A673 (cell line): ENCODE measurements at regions of chr14 and their contacts with region 1.

Region 1: DNA sequence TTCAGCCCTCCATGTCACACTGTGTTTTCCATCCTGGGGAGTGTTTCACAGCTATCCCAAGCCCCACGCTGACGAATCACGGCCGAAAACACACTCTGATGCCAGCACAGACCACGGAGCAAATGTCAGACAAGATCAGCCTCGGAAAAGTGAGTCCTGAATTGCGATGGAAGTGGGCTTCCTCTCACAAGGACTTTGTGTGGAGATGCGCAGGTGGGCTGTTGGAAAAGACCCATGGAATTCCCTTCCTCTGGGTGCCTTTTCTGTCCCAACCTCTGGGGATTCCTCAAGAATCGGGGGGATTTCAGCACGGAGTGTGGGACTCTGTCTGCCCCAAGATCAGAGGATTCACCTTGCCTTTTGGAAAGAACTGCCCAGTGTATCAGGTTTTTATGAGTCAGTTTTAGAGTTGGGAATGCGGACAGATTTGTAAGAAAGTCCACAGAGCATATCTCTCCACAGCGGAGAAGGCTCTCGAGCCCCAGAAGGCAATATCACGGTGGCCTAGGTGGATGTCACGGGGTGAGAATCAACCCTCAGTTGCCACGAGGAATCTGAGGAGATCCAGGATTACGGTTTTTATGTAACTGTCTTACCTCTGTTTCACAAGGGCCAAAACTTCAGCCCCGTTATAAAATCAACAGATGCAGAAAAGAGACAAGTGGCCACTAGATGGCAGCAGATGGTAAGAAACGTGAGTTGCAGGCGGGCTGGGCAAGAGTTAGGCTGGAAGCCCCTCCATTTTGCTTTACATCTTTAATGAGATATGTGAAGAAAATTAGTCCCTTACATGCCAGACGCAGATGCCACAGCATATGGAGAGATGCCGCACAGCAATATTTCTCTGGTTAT is 201.9 kb downstream of the DAD1 start:
- DNase-seq: peak; percentile 94
- H3K4me3 ChIP-seq: no peak overlapping the region
- H3K27ac ChIP-seq: no peak overlapping the region
- H3K4me1 ChIP-seq: peaks cover 31% of the 10 kb centered on the region
- H3K27me3 ChIP-seq: no peaks in the 10 kb centered on the region
- CTCF ChIP-seq: peak; percentile 87

Region 2: DNA sequence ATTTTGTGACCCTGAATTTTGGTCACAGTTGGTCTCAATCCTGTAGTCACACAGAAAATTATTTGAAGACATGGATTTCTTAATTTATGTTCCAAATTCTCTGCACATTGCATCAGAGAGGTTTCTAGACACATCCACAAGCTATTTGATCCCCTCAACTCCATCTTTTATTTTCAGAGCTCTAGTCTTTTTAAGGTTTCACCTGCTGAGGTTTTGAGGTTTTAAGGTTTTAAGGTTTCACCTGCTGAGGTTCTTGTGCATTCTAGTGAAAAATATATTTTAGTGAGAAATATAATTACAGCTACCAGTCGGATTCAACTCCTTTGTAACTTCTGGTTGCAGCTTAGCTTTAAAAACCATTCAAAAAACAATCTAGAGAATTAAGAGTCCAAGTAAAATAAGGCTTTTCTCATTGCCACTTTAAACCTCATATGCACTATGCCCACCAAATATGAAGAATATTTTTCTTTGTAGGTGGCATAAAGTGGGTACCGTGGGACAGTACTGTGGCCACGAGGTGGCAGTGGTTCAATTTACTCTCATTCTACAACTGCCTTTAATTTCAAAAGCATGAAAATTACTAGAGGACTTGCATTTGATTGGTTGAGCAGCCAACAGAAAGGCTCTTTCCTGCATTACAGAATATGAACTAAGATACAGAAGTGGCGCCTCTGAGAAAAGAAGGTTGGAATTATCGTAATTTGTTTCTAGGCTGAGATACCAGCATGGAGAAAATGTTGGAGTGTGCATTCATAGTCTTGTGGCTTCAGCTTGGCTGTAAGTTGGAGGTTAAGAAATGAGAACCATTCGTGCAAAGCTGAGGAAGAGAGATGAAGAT is 347.0 kb before region 1 on chr14:
- CTCF ChIA-PET with region 1: no interaction called
- POLR2A ChIA-PET with region 1: no interaction called
- intact Hi-C with region 1: no loop called
- DNase-seq: peak; percentile 49
- H3K4me3 ChIP-seq: no peak overlapping the region
- H3K27ac ChIP-seq: no peak overlapping the region
- H3K4me1 ChIP-seq: no peaks in the 10 kb centered on the region
- H3K27me3 ChIP-seq: no peaks in the 10 kb centered on the region
- CTCF ChIP-seq: peak; percentile 77

Region 3: DNA sequence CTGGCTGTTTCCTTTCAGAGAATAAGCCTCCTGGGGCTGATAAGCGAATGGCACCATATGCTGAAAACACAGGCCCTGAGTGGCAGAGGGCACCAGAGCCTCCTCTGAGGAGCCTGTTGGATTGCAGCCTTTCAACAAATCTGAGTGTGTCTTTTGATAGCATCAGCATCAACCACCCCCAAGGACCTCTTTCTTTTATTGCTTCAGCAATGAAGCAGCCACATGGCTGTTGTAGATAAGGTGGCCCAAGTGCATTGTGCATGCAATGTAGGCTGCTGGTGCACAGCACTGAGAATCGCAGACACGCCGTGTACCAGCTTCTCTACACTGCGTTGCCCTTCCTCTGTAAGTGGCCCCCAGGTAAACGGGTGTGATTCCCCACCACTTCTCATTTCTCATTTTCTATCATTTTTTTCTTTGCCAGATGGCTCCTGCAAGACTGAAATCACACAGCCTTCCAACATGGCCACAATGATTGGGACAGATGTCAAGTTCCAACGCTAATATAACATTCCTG is 10.1 kb after region 1 on chr14:
- CTCF ChIA-PET with region 1: no interaction called
- POLR2A ChIA-PET with region 1: no interaction called
- intact Hi-C with region 1: no loop called
- DNase-seq: no peak
- H3K4me3 ChIP-seq: no peak overlapping the region
- H3K27ac ChIP-seq: no peak overlapping the region
- H3K4me1 ChIP-seq: peaks cover 32% of the 10 kb centered on the region
- H3K27me3 ChIP-seq: no peaks in the 10 kb centered on the region
- CTCF ChIP-seq: no peak

Region 4: DNA sequence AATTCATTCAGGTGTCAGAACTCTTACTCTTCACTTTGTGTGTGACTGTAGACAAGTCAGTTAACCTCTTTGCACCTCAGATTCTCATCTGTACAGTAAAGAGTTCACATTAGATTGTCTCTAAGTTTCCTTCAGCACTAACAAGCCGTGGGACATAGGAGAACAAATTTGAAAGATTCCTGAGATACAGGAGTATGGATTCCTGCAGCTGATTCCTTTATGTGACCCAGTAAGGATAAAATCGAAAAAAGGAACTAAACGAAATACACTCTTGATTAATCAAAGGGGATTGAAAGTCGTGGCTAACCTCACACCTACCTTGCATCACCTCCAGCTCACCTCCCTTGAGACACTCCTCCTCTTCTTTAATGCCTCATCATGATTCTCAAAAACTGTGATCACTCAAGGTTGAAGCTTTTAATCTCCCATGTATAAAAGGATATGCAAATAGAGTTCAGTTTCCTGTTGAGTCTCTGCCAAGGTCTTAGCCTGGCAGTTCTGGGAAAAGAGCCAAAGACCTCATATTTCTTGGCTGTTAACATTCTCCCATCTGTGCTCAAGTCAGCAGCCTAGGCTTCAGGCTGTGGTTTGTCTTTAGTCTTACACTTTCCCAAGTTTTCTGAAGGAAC is 45.3 kb after region 1 on chr14:
- CTCF ChIA-PET with region 1: interaction called, 3 read pairs
- POLR2A ChIA-PET with region 1: no interaction called
- intact Hi-C with region 1: loop called (anchors 2 kb)
- DNase-seq: peak; percentile 98
- H3K4me3 ChIP-seq: peak overlapping the region; percentile 8
- H3K27ac ChIP-seq: peak overlapping the region; percentile 97
- H3K4me1 ChIP-seq: peaks cover 84% of the 10 kb centered on the region
- H3K27me3 ChIP-seq: no peaks in the 10 kb centered on the region
- CTCF ChIP-seq: no peak

Region 5: GRCh38 chr14:22472935-22473854 is 86.0 kb after region 1 on chr14:
- CTCF ChIA-PET with region 1: interaction called, 47 read pairs
- POLR2A ChIA-PET with region 1: interaction called, 4 read pairs
- intact Hi-C with region 1: loop called (anchors 1 kb)
- DNase-seq: peak; percentile 89
- H3K4me3 ChIP-seq: no peak overlapping the region
- H3K27ac ChIP-seq: peak overlapping the region; percentile 80
- H3K4me1 ChIP-seq: peaks cover 94% of the 10 kb centered on the region
- H3K27me3 ChIP-seq: no peaks in the 10 kb centered on the region
- CTCF ChIP-seq: peak; percentile 75

Region 6: GRCh38 chr14:22556990-22557623 is 170.0 kb after region 1 on chr14:
- CTCF ChIA-PET with region 1: interaction called, 4 read pairs
- POLR2A ChIA-PET with region 1: no interaction called
- intact Hi-C with region 1: loop called (anchors 1 kb)
- DNase-seq: peak; percentile 88
- H3K4me3 ChIP-seq: peak overlapping the region; percentile 27
- H3K27ac ChIP-seq: peak overlapping the region; percentile 72
- H3K4me1 ChIP-seq: peaks cover 63% of the 10 kb centered on the region
- H3K27me3 ChIP-seq: no peaks in the 10 kb centered on the region
- CTCF ChIP-seq: peak; percentile 100

Region 7: DNA sequence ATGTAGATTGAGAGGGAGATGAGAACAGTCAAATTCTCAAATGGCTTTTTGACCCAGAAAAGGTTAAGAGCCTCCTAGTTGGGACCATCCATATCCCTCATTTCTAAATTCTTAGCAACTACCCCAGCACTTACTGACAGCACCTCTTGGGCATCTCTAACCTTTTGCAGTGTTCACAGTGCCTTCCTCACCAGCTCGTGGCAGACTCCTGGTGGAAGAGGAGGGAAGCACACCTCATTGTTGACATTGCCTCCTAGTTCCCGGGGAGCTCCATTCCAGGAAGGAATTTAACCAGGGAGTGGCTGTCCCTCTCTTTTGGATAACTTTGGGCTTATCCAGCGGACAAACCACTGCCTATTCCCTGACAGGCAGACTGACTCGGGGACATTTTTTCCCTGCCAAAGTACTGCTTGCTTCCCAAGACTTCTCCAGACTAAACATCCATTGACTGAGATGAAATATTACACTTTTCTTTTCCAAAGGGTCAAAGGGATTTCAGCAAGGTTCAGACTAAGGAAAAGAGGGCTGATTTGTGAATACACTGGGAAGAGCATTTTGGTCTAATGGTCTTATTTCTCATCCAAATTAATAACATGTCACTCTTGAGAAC is 266.0 kb after region 1 on chr14:
- CTCF ChIA-PET with region 1: interaction called, 3 read pairs
- POLR2A ChIA-PET with region 1: no interaction called
- intact Hi-C with region 1: loop called (anchors 2 kb)
- DNase-seq: peak; percentile 80
- H3K4me3 ChIP-seq: no peak overlapping the region
- H3K27ac ChIP-seq: no peak overlapping the region
- H3K4me1 ChIP-seq: peaks cover 14% of the 10 kb centered on the region
- H3K27me3 ChIP-seq: no peaks in the 10 kb centered on the region
- CTCF ChIP-seq: peak; percentile 89

Region 8: GRCh38 chr14:22715186-22715812 is 328.1 kb after region 1 on chr14:
- CTCF ChIA-PET with region 1: no interaction called
- POLR2A ChIA-PET with region 1: no interaction called
- intact Hi-C with region 1: loop called (anchors 10 kb)
- DNase-seq: no peak
- H3K4me3 ChIP-seq: no peak overlapping the region
- H3K27ac ChIP-seq: no peak overlapping the region
- H3K4me1 ChIP-seq: peaks cover 5% of the 10 kb centered on the region
- H3K27me3 ChIP-seq: peaks cover 16% of the 10 kb centered on the region
- CTCF ChIP-seq: no peak

Region 9: GRCh38 chr14:22895402-22895801 is 508.3 kb after region 1 on chr14:
- CTCF ChIA-PET with region 1: no interaction called
- POLR2A ChIA-PET with region 1: no interaction called
- intact Hi-C with region 1: no loop called
- DNase-seq: no peak
- H3K4me3 ChIP-seq: no peak overlapping the region
- H3K27ac ChIP-seq: no peak overlapping the region
- H3K4me1 ChIP-seq: no peaks in the 10 kb centered on the region
- H3K27me3 ChIP-seq: no peaks in the 10 kb centered on the region
- CTCF ChIP-seq: no peak

Region 10: DNA sequence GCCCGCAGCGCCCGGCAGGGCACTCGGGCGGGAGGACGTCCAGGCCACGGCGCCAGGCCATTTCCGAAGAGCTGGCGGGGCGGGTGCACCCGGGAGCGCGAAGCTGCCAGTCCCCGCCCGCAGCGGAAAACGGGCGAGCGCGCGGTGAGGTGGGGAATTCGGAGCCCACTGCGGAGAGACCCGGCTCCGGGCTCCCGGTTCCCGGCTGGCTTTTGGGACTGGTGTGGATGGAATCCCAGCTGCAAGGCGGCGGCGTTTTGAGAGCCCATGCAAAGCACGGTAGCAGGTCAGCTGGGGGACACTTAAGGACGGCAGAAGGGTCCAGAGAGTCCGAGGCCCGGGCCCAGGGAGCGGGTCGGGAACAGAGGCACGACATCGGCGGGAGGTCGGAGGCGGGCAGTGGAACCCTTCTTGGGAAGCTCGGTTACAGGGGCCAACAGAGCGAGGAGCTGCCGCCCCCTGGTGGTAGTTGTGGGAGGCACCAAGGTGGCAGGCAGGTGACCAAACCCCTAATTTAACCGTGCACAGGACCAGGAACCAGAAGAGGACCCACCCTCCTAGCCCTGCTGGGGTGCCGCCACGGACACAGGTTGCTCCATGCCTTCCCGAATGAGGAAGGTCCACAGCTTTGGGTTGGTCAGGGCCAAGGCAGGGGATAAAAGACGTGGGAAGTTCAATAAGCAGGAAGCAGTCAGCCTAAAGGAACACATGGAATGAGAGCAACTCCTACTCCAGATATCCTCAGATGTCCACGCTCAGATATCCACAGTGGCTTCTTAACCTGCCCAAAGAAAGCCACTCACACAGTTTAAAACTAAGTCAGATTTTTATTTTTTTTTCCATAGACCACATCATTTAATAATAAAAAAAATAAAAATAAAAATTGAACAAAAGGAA is 670.9 kb after region 1 on chr14:
- CTCF ChIA-PET with region 1: no interaction called
- POLR2A ChIA-PET with region 1: no interaction called
- intact Hi-C with region 1: loop called (anchors 5 kb)
- DNase-seq: peak; percentile 93
- H3K4me3 ChIP-seq: peak overlapping the region; percentile 76
- H3K27ac ChIP-seq: peak overlapping the region; percentile 77
- H3K4me1 ChIP-seq: peaks cover 27% of the 10 kb centered on the region
- H3K27me3 ChIP-seq: no peaks in the 10 kb centered on the region
- CTCF ChIP-seq: peak; percentile 98